Psoas muscle (tissue), 8 donors: ENCODE measurements at regions of chr10 and their contacts with region 1.

Region 1: GRCh38 chr10:89029785-89030437 is 39.3 kb downstream of the FAS start:
- DNase-seq: peak; percentile 64 to 71
- ATAC-seq: peak; percentile 60 to 78 (median 71)
- H3K4me3 ChIP-seq: no peak overlapping the region
- H3K27ac ChIP-seq: no peak overlapping the region
- H3K4me1 ChIP-seq: peaks cover 8% of the 10 kb centered on the region
- H3K27me3 ChIP-seq: no peaks in the 10 kb centered on the region
- CTCF ChIP-seq: peak; percentile 93

Region 2: DNA sequence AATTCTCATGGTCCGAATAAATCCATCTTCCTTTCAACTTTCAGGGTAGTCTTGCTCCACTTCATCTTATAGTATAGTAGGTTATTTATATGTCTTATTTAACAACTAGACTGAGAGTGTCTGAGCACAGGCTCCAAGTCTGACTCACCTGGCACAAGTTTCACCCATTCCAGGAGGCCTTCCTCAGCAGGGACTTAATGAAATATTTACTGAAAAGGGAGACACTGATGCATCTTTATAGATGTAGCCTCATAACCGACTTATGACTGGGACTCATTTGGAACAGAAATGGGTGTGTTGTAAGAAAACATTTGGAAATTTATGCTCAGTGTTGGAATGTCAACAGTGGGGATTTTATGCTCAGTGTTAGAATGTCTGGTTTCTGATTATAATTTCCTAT is 117.3 kb after region 1 on chr10:
- intact Hi-C with region 1: no loop called
- DNase-seq: no peak
- ATAC-seq: no peak
- H3K4me3 ChIP-seq: no peak overlapping the region
- H3K27ac ChIP-seq: no peak overlapping the region
- H3K4me1 ChIP-seq: no peaks in the 10 kb centered on the region
- H3K27me3 ChIP-seq: no peaks in the 10 kb centered on the region
- CTCF ChIP-seq: no peak

Region 3: DNA sequence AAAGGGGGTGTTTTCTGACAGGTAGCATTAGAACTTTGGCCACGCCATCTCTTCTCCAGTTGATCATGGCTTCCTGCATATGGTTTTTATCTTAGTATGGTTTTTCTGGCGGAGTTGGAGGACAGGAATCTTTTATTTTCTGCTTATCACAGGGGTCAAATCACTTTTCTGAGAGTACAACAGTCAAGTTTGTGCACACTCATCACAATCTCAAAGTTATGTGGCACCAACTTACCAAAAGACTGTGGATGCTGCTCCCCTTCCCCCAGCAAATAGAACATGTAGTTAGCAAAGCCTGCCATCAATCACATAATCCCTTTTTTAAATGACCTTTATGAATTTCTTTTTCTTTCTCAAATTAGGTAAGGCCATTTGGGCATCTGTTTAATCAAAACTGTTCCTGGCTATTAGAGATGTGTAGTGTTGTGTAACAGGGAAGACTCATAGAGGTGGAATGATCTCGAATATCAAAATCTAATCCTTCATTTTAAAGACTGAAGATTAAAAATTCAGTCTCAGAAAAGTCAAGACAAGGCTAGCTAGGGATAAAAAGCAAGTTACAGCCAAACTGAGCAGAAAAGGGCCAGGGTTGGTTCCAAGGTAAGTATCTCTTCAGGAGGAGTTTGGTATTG is 181.0 kb after region 1 on chr10:
- intact Hi-C with region 1: loop called (anchors 1 to 5 kb)
- DNase-seq: no peak
- ATAC-seq: no peak
- H3K4me3 ChIP-seq: no peak overlapping the region
- H3K27ac ChIP-seq: no peak overlapping the region
- H3K4me1 ChIP-seq: peaks cover 9% of the 10 kb centered on the region
- H3K27me3 ChIP-seq: peaks cover 0 to 34% (median 2%) of the 10 kb centered on the region in 3 donors
- CTCF ChIP-seq: no peak